Left cardiac atrium (tissue), 4 donors: ENCODE measurements at regions of chr12 and their contacts with region 1.

Region 1: GRCh38 chr12:3252450-3252891 is 175.3 kb downstream of the TSPAN9 start:
- DNase-seq: peak; percentile 90
- ATAC-seq: peak; percentile 60 to 75

Region 2: DNA sequence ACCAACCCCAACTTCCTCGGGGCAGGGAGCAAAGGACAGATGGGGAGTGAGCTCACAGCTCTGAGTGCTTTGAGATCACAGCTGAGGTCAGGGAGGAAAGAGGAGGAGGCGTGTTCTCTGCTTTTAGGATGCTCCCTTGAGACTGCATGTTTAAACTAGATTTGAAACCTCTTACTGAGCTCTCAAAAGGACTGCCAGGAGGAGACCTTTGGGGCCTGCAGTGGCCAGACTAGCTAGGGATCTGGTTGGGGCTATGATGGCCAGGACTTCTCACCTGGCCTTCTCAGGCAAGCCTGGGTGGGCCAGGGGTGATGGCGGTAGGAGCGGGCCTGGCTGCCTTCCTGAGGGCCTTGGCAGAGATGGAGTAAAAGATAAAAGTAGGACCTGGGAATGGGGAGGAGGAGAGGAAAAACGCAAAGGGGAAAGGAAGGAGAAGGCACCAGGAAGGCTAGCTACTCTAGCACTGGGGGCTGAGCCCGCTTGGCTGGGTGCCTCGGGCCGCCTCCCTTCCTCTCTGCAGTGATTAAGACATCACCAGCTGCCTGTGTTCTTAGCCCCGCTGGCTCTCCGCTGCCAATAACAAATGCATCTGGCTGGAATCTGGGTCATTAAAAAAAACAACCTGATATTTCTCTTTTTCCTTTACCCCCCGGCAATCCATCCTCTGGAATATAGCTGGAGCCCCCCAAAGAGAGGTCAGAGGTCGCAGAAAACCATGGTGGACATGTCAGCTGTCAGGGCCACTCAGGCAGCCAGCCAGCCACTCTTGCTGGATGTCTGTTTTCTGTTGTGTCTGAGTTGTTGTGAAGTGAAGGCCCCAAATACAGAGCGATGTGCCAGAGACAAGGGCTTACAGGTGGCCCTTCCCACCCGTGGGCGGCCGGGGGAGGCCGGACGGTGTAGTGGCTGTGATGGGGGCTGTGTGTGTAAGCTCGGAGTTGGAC is 34.0 kb before region 1 on chr12:
- intact Hi-C with region 1: loop called in 1 of 2 experiments (anchors 5 kb)
- DNase-seq: peak; percentile 89
- ATAC-seq: peak; percentile 76 to 86

Region 3: DNA sequence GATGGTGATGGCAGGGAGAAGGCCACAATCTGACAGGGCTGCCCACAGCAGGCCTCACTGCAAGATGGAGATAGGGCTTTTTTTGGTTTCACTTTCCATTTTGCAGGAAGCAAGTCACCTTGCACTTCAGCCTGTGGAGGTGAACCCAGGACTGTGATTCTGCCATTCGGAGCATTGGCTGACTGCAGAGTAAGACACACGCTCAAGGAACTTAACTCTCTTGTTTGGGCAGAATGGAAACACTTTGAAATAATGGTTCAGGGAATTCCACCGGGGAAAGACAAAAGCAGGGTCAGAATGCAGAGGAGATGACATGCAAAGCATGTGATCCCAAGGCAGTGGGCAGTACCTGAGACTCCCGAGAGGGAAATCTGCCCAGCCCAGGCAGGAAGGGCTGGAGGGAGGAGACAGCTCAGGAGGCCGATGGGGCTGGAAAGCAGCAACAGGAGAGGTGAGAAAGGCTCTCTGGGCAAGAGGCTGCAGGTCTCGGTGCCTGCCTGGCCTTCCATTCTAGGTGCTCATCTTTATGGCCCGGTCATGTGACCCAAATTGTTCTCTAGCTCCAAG is 179.8 kb after region 1 on chr12:
- intact Hi-C with region 1: no loop called
- DNase-seq: no peak
- ATAC-seq: no peak